Right lobe of liver (tissue), 6 donors: ENCODE measurements at regions of chr2 and their contacts with region 1.

Region 1: GRCh38 chr2:229921892-229922445 is at the start of gene TRIP12:
- DNase-seq: peak; percentile 93 to 96 (median 96)
- ATAC-seq: peak; percentile 89 to 96 (median 90)
- H3K4me3 ChIP-seq: peak within 1 kb of the TSS; percentile 71 to 91 (median 89)
- H3K27ac ChIP-seq: peak within 1 kb of the TSS; percentile 86 to 97 (median 91)
- H3K4me1 ChIP-seq: peaks cover 0 to 17% (median 8%) of the 10 kb centered on the region in 4 donors
- H3K27me3 ChIP-seq: no peaks in the 10 kb centered on the region
- CTCF ChIP-seq: no peak
- POLR2A ChIP-seq: peak; percentile 48
- total RNA-seq, gene TRIP12: 66.5 to 98.0 (median 85.4) TPM

Region 2: GRCh38 chr2:229800997-229801754 is 120.8 kb before region 1 on chr2:
- intact Hi-C with region 1: loop called in 1 of 2 experiments (anchors 10 kb)
- DNase-seq: peak; percentile 56 to 80 (median 60)
- ATAC-seq: peak; percentile 77 to 83 (median 81)
- H3K4me3 ChIP-seq: no peak overlapping the region
- H3K27ac ChIP-seq: no peak overlapping the region
- H3K4me1 ChIP-seq: peaks cover 0 to 45% (median 8%) of the 10 kb centered on the region in 4 donors
- H3K27me3 ChIP-seq: no peaks in the 10 kb centered on the region
- CTCF ChIP-seq: peak; percentile 52 to 87 (median 80)
- POLR2A ChIP-seq: no peak